Activated CD4-positive, alpha-beta T cell treated with anti-CD3 and anti-CD28 coated beads for 36 hours (primary cell): ENCODE measurements at regions of chr14 and their contacts with region 1.

Region 1: GRCh38 chr14:77212943-77213678 is 31.5 kb downstream of the TMEM63C start:
- DNase-seq: peak; percentile 73
- ATAC-seq: peak; percentile 74
- H3K4me3 Mint-ChIP-seq: no peak overlapping the region
- H3K27ac Mint-ChIP-seq: no peak overlapping the region
- H3K4me1 Mint-ChIP-seq: no peaks in the 10 kb centered on the region
- H3K27me3 Mint-ChIP-seq: peaks cover 18% of the 10 kb centered on the region

Region 2: DNA sequence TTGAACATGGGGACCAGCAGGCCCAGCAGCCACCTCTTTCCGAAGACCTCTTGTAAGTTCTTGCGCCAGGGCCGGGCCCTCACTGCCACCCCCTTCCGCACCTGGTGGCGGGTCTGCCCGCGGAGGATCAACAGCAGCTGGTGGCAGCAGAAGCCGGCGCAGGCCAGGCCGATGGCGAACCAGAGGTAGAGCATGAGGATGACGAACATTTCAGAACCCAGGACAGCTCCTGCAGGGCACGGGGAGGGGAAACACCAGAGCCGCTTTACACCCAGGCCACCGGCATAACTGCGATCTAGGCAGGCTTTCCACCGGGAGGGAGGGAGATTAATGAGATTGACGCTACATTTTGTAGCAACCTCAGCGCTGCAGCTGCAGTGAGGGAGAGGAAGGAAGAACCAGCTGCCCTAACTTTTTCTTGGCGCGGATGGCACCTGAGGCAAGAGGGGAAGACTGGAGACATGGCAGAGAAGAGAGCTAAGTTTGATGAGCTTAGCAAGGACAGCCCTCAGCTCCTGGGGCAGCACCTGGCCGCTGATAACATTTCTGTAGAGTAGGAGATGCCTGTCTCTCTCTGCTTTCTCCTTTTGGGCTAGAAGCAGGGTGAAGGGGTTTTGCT is 79.3 kb before region 1 on chr14:
- CTCF ChIA-PET with region 1: interaction called, 7 read pairs
- POLR2A ChIA-PET with region 1: no interaction called
- intact Hi-C with region 1: loop called in 1 of 2 experiments (anchors 1 kb)
- DNase-seq: peak; percentile 83
- ATAC-seq: peak; percentile 95
- H3K4me3 Mint-ChIP-seq: no peak overlapping the region
- H3K27ac Mint-ChIP-seq: no peak overlapping the region
- H3K4me1 Mint-ChIP-seq: no peaks in the 10 kb centered on the region
- H3K27me3 Mint-ChIP-seq: peaks cover 53% of the 10 kb centered on the region

Region 3: GRCh38 chr14:77151918-77152588 is 61.1 kb before region 1 on chr14:
- CTCF ChIA-PET with region 1: interaction called, 18 read pairs
- POLR2A ChIA-PET with region 1: no interaction called
- intact Hi-C with region 1: loop called (anchors 1 to 5 kb)
- DNase-seq: no peak
- ATAC-seq: peak; percentile 69
- H3K4me3 Mint-ChIP-seq: no peak overlapping the region
- H3K27ac Mint-ChIP-seq: no peak overlapping the region
- H3K4me1 Mint-ChIP-seq: no peaks in the 10 kb centered on the region
- H3K27me3 Mint-ChIP-seq: peaks cover 34% of the 10 kb centered on the region

Region 4: DNA sequence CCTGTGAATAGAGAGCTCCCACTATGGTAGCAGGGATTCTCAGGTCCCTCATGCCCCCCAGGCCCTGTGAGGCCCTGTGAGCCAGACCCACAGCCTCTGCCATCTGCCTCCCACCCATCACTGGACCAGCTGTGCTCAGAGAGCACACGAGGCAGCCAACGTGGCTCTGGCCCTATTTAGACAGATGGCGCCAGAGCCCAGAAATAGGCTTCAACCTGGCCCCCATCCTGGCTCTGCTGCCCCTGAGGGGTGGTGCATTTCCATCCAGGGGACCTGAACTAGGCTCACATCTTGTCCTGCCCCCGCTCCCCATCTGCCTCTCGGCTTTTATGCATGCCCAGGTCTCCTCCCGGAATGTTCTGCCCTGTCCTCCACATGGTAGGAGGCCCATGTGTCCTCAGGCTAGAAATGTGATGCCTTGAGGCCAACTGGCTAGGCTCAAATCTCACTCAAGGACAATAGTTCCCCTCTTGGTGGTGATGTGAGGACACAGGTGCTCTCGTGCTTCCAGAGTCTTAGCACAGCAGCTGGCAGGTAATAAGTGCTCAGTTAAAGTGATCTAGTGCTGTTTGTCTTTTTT is 12.6 kb before region 1 on chr14:
- CTCF ChIA-PET with region 1: no interaction called
- POLR2A ChIA-PET with region 1: no interaction called
- intact Hi-C with region 1: no loop called
- DNase-seq: no peak
- ATAC-seq: no peak
- H3K4me3 Mint-ChIP-seq: no peak overlapping the region
- H3K27ac Mint-ChIP-seq: no peak overlapping the region
- H3K4me1 Mint-ChIP-seq: no peaks in the 10 kb centered on the region
- H3K27me3 Mint-ChIP-seq: peaks cover 7% of the 10 kb centered on the region

Region 5: GRCh38 chr14:77529963-77530362 is 316.9 kb after region 1 on chr14:
- CTCF ChIA-PET with region 1: no interaction called
- POLR2A ChIA-PET with region 1: no interaction called
- intact Hi-C with region 1: no loop called
- DNase-seq: no peak
- ATAC-seq: no peak
- H3K4me3 Mint-ChIP-seq: no peak overlapping the region
- H3K27ac Mint-ChIP-seq: no peak overlapping the region
- H3K4me1 Mint-ChIP-seq: peaks cover 3% of the 10 kb centered on the region
- H3K27me3 Mint-ChIP-seq: no peaks in the 10 kb centered on the region